CD4-positive, alpha-beta memory T cell (primary cell): ENCODE measurements at regions of chrX and their contacts with region 1.

Region 1: GRCh38 chrX:152830312-152831305 is at the starts of genes CETN2 and NSDHL:
- DNase-seq: peak; percentile 94 to 95 (median 94)
- H3K4me3 ChIP-seq: peak within 1 kb of the TSS; percentile 69 to 70
- H3K4me3 Mint-ChIP-seq: peak within 1 kb of the TSS; percentile 89 to 97 (median 94)
- H3K27ac ChIP-seq: peak within 1 kb of the TSS; percentile 77
- H3K27ac Mint-ChIP-seq: peak within 1 kb of the TSS; percentile 83 to 98 (median 96)
- H3K4me1 ChIP-seq: peaks cover 20% of the 10 kb centered on the region
- H3K4me1 Mint-ChIP-seq: peaks cover 12 to 31% (median 22%) of the 10 kb centered on the region in 4 donors
- H3K27me3 ChIP-seq: no peaks in the 10 kb centered on the region
- H3K27me3 Mint-ChIP-seq: no peaks in the 10 kb centered on the region
- total RNA-seq, gene CETN2: 5.6 to 6.5 TPM
- total RNA-seq, gene NSDHL: 6.5 to 7.1 TPM

Region 2: GRCh38 chrX:152810403-152810802 is 20.2 kb before region 1 on chrX:
- CTCF ChIA-PET with region 1: no interaction called
- POLR2A ChIA-PET with region 1: no interaction called
- intact Hi-C with region 1: no loop called
- DNase-seq: no peak
- H3K4me3 ChIP-seq: no peak overlapping the region
- H3K4me3 Mint-ChIP-seq: no peak overlapping the region
- H3K27ac ChIP-seq: no peak overlapping the region
- H3K27ac Mint-ChIP-seq: no peak overlapping the region
- H3K4me1 ChIP-seq: no peaks in the 10 kb centered on the region
- H3K4me1 Mint-ChIP-seq: peaks cover 0 to 12% (median 6%) of the 10 kb centered on the region in 4 donors
- H3K27me3 ChIP-seq: no peaks in the 10 kb centered on the region
- H3K27me3 Mint-ChIP-seq: peaks cover 0 to 3% of the 10 kb centered on the region in 2 donors

Region 3: GRCh38 chrX:153333768-153334645 is 503.4 kb after region 1 on chrX and contains the start of gene ZNF275:
- CTCF ChIA-PET with region 1: no interaction called
- POLR2A ChIA-PET with region 1: no interaction called
- intact Hi-C with region 1: loop called (anchors 10 kb)
- DNase-seq: peak; percentile 78 to 84 (median 83)
- H3K4me3 ChIP-seq: peak within 1 kb of the TSS in 1 of 2 donors; percentile 47
- H3K4me3 Mint-ChIP-seq: peak within 1 kb of the TSS; percentile 78 to 89 (median 86)
- H3K27ac ChIP-seq: peak within 1 kb of the TSS; percentile 67
- H3K27ac Mint-ChIP-seq: peak within 1 kb of the TSS; percentile 65 to 92 (median 85)
- H3K4me1 ChIP-seq: peaks cover 42% of the 10 kb centered on the region
- H3K4me1 Mint-ChIP-seq: peaks cover 30 to 47% (median 34%) of the 10 kb centered on the region in 4 donors
- H3K27me3 ChIP-seq: no peaks in the 10 kb centered on the region
- H3K27me3 Mint-ChIP-seq: no peaks in the 10 kb centered on the region
- total RNA-seq, gene ZNF275: 15.3 to 16.1 TPM